Heart right ventricle (tissue), 16 donors: ENCODE measurements at regions of chr10 and their contacts with region 1.

Region 1: GRCh38 chr10:95818668-95819067 is 62.7 kb downstream of the ENTPD1 start:
- DNase-seq: no peak
- ATAC-seq: no peak
- H3K4me3 ChIP-seq: no peak overlapping the region
- H3K27ac ChIP-seq: peak overlapping the region in 4 of 10 donors; percentile 22 to 47 (median 38)
- H3K4me1 ChIP-seq: peaks cover 0 to 66% (median 31%) of the 10 kb centered on the region in 9 donors
- H3K27me3 ChIP-seq: peaks cover 0 to 4% (median 0%) of the 10 kb centered on the region in 7 donors
- CTCF ChIP-seq: no peak

Region 2: DNA sequence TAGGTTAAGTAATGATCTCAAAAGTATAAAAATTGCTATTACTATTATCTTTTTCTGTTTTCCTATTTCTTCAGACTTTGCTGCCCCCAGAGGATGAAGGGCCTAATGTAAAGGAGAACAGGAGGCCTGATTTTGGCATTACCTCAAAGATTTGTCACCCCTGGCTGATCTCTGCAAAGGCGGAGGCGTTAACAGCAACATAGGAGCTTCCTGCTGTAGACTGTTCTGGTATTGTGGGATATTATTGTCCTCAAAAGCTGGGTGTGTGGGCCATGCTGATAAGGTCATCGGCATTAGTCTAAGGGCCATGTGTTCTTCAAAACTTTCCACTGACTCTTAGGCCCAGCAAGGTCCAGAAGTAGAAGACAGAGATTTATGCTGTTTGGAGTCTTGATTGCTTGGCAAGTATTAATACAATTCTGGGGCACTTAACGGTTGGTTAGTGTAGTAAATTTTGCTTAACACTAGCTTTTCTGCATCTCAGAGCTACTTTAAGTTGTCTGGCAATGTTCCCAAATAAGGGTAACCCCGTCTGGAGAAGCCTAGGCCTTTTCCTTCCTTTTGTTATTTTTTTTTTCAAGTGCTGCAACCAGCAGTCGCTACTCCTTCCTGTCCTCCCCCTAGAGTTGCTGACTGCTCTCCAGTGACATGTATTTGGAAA is 76.7 kb before region 1 on chr10:
- intact Hi-C with region 1: loop called in 1 of 10 experiments (anchors 5 kb)
- DNase-seq: peak in 1 of 2 donors; percentile 74
- ATAC-seq: peak; percentile 94 to 99 (median 96)
- H3K4me3 ChIP-seq: no peak overlapping the region
- H3K27ac ChIP-seq: peak overlapping the region; percentile 62 to 85 (median 78)
- H3K4me1 ChIP-seq: peaks cover 0 to 41% (median 28%) of the 10 kb centered on the region in 9 donors
- H3K27me3 ChIP-seq: no peaks in the 10 kb centered on the region
- CTCF ChIP-seq: peak in 5 of 9 donors; percentile 12 to 50 (median 38)

Region 3: DNA sequence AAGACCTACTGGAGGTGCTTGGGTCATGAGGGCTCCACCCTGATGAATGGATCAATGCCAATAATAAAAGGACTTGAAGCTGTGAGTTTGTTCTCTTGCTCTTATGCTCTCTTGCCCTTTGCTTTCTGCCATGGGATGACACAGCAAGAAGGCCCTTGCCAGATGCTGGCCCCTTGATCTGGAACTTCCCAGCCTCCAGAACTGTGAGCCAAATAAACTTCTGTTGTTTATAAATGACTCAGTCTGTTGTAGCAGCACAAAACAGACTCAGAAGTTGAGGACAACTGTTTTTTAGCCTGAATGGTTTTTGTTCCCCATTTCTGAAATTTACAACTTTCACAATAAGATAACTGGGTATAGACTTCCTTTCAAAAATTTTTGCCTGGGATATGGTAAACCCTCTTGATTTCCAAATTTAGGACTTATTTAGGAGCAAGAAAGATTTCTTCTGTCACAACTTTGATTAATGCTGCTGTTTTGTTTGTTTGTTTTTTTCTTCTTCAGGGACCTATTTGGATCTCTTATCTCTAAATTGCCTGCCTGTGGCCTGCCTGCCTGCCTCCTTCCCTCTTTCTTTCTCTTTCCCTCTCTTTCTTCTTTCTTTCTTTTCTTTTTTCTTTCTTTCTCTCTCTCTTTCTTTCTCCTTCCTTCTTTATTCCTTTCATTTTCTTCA is 50.6 kb before region 1 on chr10:
- intact Hi-C with region 1: loop called in 1 of 10 experiments (anchors 5 kb)
- DNase-seq: peak in 1 of 2 donors; percentile 18
- ATAC-seq: peak in 6 of 8 donors; percentile 21 to 69 (median 41)
- H3K4me3 ChIP-seq: no peak overlapping the region
- H3K27ac ChIP-seq: peak overlapping the region in 3 of 10 donors; percentile 37 to 84 (median 37)
- H3K4me1 ChIP-seq: peaks cover 0 to 37% (median 0%) of the 10 kb centered on the region in 9 donors
- H3K27me3 ChIP-seq: no peaks in the 10 kb centered on the region
- CTCF ChIP-seq: no peak

Region 4: GRCh38 chr10:95935429-95935828 is 116.8 kb after region 1 on chr10:
- intact Hi-C with region 1: no loop called
- DNase-seq: no peak
- ATAC-seq: no peak
- H3K4me3 ChIP-seq: no peak overlapping the region
- H3K27ac ChIP-seq: no peak overlapping the region
- H3K4me1 ChIP-seq: no peaks in the 10 kb centered on the region
- H3K27me3 ChIP-seq: no peaks in the 10 kb centered on the region
- CTCF ChIP-seq: no peak